Transverse colon (tissue), 4 donors: ENCODE measurements at regions of chr7 and their contacts with region 1.

Region 1: GRCh38 chr7:79953130-79953529 is 181.5 kb upstream of the GNAI1 start:
- DNase-seq: no peak
- H3K4me3 ChIP-seq: no peak overlapping the region
- H3K27ac ChIP-seq: no peak overlapping the region
- H3K4me1 ChIP-seq: no peaks in the 10 kb centered on the region
- H3K27me3 ChIP-seq: no peaks in the 10 kb centered on the region
- CTCF ChIP-seq: no peak
- EP300 ChIP-seq: no peak
- POLR2A ChIP-seq: no peak

Region 2: DNA sequence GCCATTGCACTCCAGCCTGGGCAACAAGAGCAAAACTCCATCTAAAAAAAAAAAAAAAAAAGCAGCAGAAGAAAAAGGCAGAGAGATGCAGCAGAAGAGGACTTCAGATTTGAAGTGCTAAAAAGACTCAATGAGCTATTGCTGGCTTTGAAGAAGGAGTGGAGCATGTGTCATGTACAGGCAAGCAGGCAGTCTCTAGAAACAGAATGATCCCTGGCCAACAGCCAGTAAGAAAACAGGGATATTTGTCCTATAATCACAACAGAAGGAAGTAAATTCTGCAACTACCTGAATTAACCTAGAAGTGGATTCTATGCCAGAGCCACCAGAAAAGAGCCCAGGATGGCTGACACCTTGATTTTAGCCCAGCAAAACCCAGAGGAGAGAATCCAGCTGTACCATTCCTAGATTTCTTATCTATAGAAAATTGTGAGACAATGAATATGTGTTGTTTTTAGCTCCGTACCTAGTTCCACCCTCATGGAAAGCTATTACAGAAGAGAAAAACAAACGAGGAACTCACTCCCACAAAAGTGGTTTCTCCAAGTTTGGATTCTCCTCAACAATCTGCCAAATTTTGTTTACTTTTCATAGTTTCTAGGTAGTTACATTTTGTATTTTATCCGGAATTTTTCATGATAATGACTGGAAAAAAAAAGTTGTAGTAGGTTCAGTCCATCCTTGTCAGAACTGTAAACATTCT is 16.7 kb before region 1 on chr7:
- in situ Hi-C with region 1: no loop called
- intact Hi-C with region 1: loop called (anchors 1 kb)
- DNase-seq: no peak
- H3K4me3 ChIP-seq: no peak overlapping the region
- H3K27ac ChIP-seq: no peak overlapping the region
- H3K4me1 ChIP-seq: no peaks in the 10 kb centered on the region
- H3K27me3 ChIP-seq: no peaks in the 10 kb centered on the region
- CTCF ChIP-seq: no peak
- EP300 ChIP-seq: no peak
- POLR2A ChIP-seq: no peak